ENCODE measurements at regions of chr3 and their contacts with region 1.

Region 1: DNA sequence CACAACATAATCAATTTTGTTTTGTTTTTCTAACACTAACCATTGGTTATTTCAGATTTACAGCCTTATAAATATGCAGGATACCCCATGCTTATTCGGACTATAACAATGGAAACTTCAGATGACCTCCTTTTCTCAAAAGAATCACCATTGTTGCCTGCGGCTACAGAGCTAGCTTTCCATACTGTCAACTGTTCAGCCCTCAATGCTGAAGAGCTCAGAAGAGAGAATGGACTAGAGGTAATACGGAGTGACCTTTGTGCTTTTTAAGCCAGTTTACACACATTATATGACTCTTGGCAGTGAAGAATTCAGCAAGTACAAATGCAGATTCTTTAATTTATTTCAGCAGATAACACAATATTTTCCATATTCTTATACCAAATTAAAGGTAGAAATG is 81.8 kb downstream of the DNAJC13 start:
- DNase-seq: no peak
- ATAC-seq: no peak
- H3K4me3 ChIP-seq: no peak overlapping the region
- H3K27ac ChIP-seq: no peak overlapping the region
- H3K4me1 ChIP-seq: no peaks in the 10 kb centered on the region
- H3K27me3 ChIP-seq: no peaks in the 10 kb centered on the region
- CTCF ChIP-seq: no peak
- EP300 ChIP-seq: no peak
- POLR2A ChIP-seq: no peak
- RAD21 ChIP-seq: no peak

Region 2: GRCh38 chr3:132352541-132353143 is 146.4 kb before region 1 on chr3:
- CTCF ChIA-PET with region 1: interaction called, 3 read pairs
- POLR2A ChIA-PET with region 1: no interaction called
- RAD21 ChIA-PET with region 1: no interaction called
- SMC1A ChIA-PET with region 1: no interaction called
- in situ Hi-C with region 1: no loop called
- intact Hi-C with region 1: loop called (anchors 10 kb)
- DNase-seq: peak; percentile 45
- ATAC-seq: peak; percentile 93
- H3K4me3 ChIP-seq: no peak overlapping the region
- H3K27ac ChIP-seq: no peak overlapping the region
- H3K4me1 ChIP-seq: no peaks in the 10 kb centered on the region
- H3K27me3 ChIP-seq: no peaks in the 10 kb centered on the region; a peak in 1 of 4 replicates
- CTCF ChIP-seq: peak; percentile 84 to 90 (median 90)
- EP300 ChIP-seq: no peak
- POLR2A ChIP-seq: no peak
- RAD21 ChIP-seq: peak; percentile 94